Colonic mucosa (tissue), 4 donors: ENCODE measurements at regions of chr3 and their contacts with region 1.

Region 1: GRCh38 chr3:39990532-39990931 is 181.1 kb downstream of the MYRIP start:
- DNase-seq: peak; percentile 61
- H3K4me3 ChIP-seq: no peak overlapping the region
- H3K27ac ChIP-seq: no peak overlapping the region
- H3K4me1 ChIP-seq: no peaks in the 10 kb centered on the region
- H3K27me3 ChIP-seq: no peaks in the 10 kb centered on the region
- CTCF ChIP-seq: peak; percentile 48

Region 2: DNA sequence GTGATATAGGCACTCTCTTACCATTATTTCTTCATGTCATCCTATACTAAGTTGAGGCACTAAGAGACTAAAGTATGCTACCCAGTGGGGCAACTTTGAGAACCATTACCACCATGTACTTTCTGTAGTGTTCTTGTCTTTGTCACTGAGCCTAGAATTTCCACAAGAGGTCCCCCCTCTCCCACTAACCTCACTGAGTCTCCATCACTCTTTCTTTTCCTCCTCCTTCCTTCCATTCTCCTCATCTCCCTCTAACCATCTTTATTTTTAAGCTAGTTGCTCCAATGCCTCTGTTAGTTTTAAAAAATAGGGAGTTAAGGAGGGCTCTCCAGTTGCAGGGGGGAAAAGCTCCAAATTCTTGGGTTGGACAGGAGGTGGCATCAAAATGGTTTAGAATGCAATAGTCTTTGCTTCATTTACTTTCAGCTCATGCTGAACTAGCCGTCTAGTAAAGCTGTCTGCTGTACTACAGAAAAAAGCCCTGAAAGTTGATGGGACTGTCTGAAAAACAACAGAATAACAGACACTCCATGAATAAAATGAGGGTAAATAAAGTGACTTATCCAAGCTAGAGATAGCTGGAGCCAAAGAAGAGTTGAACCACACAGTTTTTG is 266.2 kb before region 1 on chr3:
- intact Hi-C with region 1: loop called (anchors 10 kb)
- DNase-seq: no peak
- H3K4me3 ChIP-seq: no peak overlapping the region
- H3K27ac ChIP-seq: no peak overlapping the region
- H3K4me1 ChIP-seq: no peaks in the 10 kb centered on the region
- H3K27me3 ChIP-seq: no peaks in the 10 kb centered on the region
- CTCF ChIP-seq: no peak